Pancreas (tissue), 10 donors: ENCODE measurements at regions of chr1 and their contacts with region 1.

Region 1: DNA sequence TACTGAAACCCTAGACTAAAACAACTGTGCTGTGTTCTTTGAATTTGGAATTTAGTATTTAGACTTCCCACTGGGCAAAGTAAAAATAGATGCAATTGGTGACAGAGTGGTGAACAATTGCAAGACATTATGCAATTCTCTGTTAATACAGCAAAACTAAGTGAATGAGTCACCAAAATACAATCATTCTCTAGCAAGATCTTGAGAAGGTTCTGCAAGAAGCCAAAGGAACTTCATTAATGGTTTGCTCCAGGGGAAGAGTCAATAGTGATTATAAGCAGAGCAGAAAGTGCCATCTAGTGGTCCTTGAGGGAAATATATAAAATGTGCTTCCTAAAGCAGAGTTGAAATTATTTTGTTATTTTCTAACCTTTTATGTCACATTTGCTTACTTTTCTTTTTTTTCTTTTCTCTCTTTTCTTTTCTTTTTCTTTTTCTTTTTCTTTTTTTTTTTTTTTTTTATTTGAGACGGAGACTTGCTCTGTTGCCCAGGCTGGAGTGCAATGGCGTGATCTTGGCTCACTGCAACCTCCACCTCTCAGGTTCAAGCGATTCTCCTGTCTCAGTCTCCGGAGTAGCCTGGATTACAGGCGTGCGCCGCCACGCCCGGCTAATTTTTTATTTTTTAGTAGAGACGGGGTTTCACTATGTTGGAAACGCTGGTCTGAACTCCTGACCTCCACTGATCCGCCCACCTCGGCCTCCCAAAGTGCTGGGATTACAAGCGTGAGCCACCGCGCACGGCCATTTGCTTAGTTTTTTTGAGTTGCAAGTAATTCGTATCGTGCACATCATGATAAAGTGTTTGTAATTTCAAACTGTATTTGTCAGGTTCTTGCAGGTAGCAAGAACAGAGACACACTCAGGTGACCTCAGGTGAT is 99.2 kb downstream of the CTH start:
- DNase-seq: peak in 1 of 6 donors; percentile 12
- ATAC-seq: peak; percentile 91 to 96 (median 95)
- H3K4me3 ChIP-seq: no peak overlapping the region
- H3K27ac ChIP-seq: no peak overlapping the region
- H3K4me1 ChIP-seq: no peaks in the 10 kb centered on the region
- H3K27me3 ChIP-seq: no peaks in the 10 kb centered on the region
- CTCF ChIP-seq: peak; percentile 36 to 60 (median 48)

Region 2: GRCh38 chr1:70134148-70134547 is 376.1 kb before region 1 on chr1:
- intact Hi-C with region 1: loop called in 2 of 3 experiments (anchors 5 to 10 kb)
- DNase-seq: no peak
- ATAC-seq: no peak
- H3K4me3 ChIP-seq: no peak overlapping the region
- H3K27ac ChIP-seq: no peak overlapping the region
- H3K4me1 ChIP-seq: no peaks in the 10 kb centered on the region
- H3K27me3 ChIP-seq: no peaks in the 10 kb centered on the region
- CTCF ChIP-seq: no peak

Region 3: DNA sequence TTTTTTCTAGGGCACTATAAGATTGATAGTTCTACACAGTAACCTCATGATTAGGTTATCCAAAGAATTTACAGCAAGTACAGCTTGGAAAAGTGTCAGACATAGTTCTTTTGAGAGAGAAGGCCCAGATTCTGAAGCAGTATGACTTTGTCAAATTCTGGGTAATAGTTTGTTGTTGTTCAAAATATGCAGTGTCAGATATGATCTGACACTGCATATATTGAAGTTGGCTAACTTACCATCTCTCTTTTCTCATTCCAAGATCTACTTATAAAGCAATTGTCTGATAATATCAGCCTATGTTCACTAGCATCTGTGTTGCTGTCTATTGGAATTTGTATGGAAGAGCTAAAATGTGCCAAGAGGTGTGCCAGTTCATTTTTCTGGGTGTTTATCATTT is 61.0 kb after region 1 on chr1:
- intact Hi-C with region 1: no loop called
- DNase-seq: no peak
- ATAC-seq: no peak
- H3K4me3 ChIP-seq: no peak overlapping the region
- H3K27ac ChIP-seq: no peak overlapping the region
- H3K4me1 ChIP-seq: no peaks in the 10 kb centered on the region
- H3K27me3 ChIP-seq: no peaks in the 10 kb centered on the region
- CTCF ChIP-seq: no peak

Region 4: GRCh38 chr1:71019233-71019969 is 509.2 kb after region 1 on chr1:
- intact Hi-C with region 1: no loop called
- DNase-seq: no peak
- ATAC-seq: no peak
- H3K4me3 ChIP-seq: no peak overlapping the region
- H3K27ac ChIP-seq: no peak overlapping the region
- H3K4me1 ChIP-seq: no peaks in the 10 kb centered on the region
- H3K27me3 ChIP-seq: no peaks in the 10 kb centered on the region
- CTCF ChIP-seq: no peak